Ascending aorta (tissue), 2 donors: ENCODE measurements at regions of chr17 and their contacts with region 1.

Region 1: DNA sequence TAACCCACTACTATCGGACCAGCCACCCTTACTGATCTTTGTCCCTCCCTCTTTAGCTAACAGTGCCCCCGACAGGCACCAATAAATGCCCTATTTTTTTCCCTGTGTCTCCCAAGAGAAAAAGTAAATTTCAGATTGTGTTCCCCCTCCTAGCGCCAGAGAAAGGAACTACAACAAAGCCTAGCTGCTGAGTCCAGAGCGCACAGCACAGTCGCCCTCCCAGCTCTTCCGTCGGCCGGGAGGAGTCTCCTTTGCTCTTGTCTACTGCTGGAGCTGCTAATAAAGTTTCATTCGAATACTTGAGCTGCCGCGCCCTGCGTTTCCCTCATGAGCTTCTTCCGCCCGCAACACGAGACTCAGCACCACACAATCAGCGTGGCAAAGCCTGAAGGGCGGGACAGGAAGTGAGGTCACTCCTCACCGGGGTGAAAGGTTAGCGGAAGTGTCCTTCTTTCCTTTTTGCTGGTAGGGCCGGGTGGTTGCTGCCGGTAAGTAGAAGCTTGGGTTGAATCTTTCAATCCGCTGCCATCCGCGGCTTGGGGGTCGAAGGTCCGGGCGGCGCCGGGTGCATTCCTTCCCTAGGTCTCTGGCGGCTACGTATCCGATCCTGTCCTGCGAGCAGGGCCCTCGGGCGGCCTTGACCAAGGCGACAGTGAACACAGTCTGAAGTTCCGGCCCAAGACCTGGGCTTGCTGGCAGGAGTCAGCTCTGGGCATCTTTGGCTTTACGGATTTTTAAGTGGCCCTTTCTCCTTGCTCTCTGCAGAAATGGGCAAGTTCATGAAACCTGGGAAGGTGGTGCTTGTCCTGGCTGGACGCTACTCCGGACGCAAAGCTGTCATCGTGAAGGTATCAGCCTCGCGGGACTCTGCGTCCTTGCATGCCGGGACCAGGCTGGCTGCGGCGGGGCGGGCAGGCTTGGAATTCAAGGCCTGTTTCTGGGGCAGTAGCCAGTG is at the start of gene RPL27:
- DNase-seq: peak; percentile 95 to 100
- H3K4me3 ChIP-seq: peak within 1 kb of the TSS; percentile 78 to 94
- H3K27ac ChIP-seq: peak within 1 kb of the TSS; percentile 81 to 91
- H3K4me1 ChIP-seq: peaks cover 7 to 13% of the 10 kb centered on the region in 2 donors
- H3K27me3 ChIP-seq: no peaks in the 10 kb centered on the region
- CTCF ChIP-seq: peak; percentile 89 to 91 (median 90)
- total RNA-seq, gene RPL27: 417 TPM

Region 2: GRCh38 chr17:42843358-42843934 is 154.8 kb before region 1 on chr17:
- intact Hi-C with region 1: loop called (anchors 10 kb)
- DNase-seq: no peak
- H3K4me3 ChIP-seq: no peak overlapping the region
- H3K27ac ChIP-seq: peak overlapping the region in 1 of 2 donors; percentile 17
- H3K4me1 ChIP-seq: no peaks in the 10 kb centered on the region
- H3K27me3 ChIP-seq: no peaks in the 10 kb centered on the region
- CTCF ChIP-seq: peak; percentile 93 to 96 (median 95)

Region 3: GRCh38 chr17:42964161-42964932 is 33.9 kb before region 1 on chr17 and contains the start of gene AARSD1:
- intact Hi-C with region 1: loop called (anchors 1 kb)
- DNase-seq: peak; percentile 62 to 94
- H3K4me3 ChIP-seq: peak within 1 kb of the TSS; percentile 69 to 74
- H3K27ac ChIP-seq: peak within 1 kb of the TSS; percentile 78 to 84
- H3K4me1 ChIP-seq: peaks cover 0 to 4% of the 10 kb centered on the region in 2 donors
- H3K27me3 ChIP-seq: no peaks in the 10 kb centered on the region
- CTCF ChIP-seq: no peak
- total RNA-seq, gene AARSD1: 3.8 TPM

Region 4: GRCh38 chr17:42980398-42981397 is 17.6 kb before region 1 on chr17 and contains the start of gene RUNDC1:
- intact Hi-C with region 1: loop called (anchors 1 kb)
- DNase-seq: peak; percentile 65 to 96
- H3K4me3 ChIP-seq: peak within 1 kb of the TSS; percentile 96 to 98
- H3K27ac ChIP-seq: peak within 1 kb of the TSS; percentile 57 to 63
- H3K4me1 ChIP-seq: peaks cover 0 to 9% of the 10 kb centered on the region in 2 donors
- H3K27me3 ChIP-seq: no peaks in the 10 kb centered on the region
- CTCF ChIP-seq: peak in 1 of 3 experiments; percentile 23
- total RNA-seq, gene RUNDC1: 10.2 TPM

Region 5: DNA sequence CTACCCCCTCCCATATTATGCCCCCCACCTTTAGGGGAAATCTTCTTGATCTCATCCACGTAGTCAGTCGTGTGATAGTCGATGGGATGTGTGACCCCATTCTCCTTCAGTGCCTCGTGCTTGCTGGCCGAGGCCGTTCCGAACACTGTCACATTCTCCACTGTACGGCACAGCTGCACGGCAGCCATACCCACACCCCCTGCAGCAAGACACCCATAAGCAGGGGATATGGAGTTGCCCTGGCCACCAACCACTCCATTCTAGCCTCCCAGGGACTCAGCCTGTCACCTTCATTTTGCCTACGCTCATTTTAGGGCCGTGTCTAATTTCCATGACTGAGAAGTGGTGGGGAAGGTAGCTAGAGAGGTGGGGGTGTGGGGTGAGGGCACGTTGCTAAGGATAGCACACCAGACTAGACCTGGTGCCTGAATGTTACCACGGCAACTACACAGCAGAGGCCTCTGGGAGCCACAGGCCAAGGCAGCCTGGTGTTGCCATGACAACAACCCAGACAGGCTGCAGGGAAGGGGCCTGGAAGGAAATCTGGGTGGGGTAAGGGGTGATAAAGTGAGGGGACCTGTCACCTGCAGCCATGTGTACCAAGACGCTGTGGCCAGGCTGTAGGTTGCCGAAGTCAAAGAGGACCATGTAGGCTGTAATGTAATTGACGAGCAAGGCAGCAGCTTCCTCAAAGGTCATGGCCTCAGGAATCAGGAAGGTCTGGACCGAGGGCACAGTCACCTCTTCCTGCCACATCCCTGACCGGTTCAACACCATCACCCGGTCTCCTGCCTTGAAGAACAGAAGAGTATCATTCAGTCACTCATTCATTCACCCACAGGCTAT is 20.0 kb after region 1 on chr17:
- intact Hi-C with region 1: no loop called
- DNase-seq: no peak
- H3K4me3 ChIP-seq: no peak overlapping the region
- H3K27ac ChIP-seq: no peak overlapping the region
- H3K4me1 ChIP-seq: peaks cover 0 to 17% of the 10 kb centered on the region in 2 donors
- H3K27me3 ChIP-seq: no peaks in the 10 kb centered on the region
- CTCF ChIP-seq: no peak

Region 6: GRCh38 chr17:43125133-43125966 is 127.1 kb after region 1 on chr17 and contains the start of gene BRCA1:
- intact Hi-C with region 1: loop called (anchors 1 kb)
- DNase-seq: peak; percentile 92 to 97
- H3K4me3 ChIP-seq: peak within 1 kb of the TSS; percentile 69 to 76
- H3K27ac ChIP-seq: peak within 1 kb of the TSS; percentile 73 to 87
- H3K4me1 ChIP-seq: peaks cover 0 to 25% of the 10 kb centered on the region in 2 donors
- H3K27me3 ChIP-seq: no peaks in the 10 kb centered on the region
- CTCF ChIP-seq: no peak
- total RNA-seq, gene BRCA1: 0.85 TPM

Region 7: GRCh38 chr17:43591779-43592562 is 593.7 kb after region 1 on chr17:
- intact Hi-C with region 1: no loop called
- DNase-seq: peak; percentile 11 to 88
- H3K4me3 ChIP-seq: peak overlapping the region in 1 of 2 donors; percentile 45
- H3K27ac ChIP-seq: peak overlapping the region; percentile 83 to 85
- H3K4me1 ChIP-seq: peaks cover 8 to 18% of the 10 kb centered on the region in 2 donors
- H3K27me3 ChIP-seq: no peaks in the 10 kb centered on the region
- CTCF ChIP-seq: no peak